ENCODE measurements at regions of chr2 and their contacts with region 1.

Region 1: DNA sequence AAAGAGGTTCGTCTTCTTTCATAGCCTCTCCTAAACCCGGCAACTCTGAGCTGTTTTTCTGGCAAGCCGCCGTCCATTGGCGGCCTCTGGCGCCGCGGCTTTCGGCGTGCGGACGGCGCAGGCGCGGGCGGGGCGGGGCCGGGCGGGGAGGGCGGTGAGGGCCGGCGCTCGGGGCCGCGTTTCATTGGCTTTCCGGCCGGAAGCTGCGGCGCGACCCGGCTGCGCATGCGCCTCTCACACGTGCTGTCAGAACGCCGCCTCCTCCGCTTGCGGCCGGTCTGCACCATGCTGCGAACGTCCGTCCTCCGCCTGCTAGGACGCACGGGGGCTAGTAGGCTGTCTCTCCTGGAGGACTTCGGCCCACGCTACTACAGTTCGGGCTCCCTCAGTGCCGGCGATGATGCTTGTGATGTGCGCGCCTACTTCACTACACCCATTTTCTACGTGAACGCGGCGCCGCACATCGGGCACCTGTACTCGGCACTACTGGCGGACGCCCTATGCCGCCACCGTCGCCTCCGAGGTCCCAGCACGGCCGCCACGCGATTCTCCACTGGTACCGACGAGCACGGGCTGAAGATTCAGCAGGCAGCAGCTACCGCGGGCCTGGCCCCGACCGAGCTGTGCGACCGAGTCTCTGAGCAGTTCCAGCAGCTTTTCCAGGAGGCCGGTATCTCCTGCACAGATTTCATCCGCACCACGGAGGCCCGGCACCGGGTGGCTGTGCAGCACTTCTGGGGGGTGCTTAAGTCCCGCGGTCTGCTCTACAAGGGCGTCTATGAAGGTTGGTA is at the start of gene MARS2:
- DNase-seq: peak; percentile 95
- H3K4me3 Mint-ChIP-seq: peak within 1 kb of the TSS; percentile 80
- H3K27ac Mint-ChIP-seq: peak within 1 kb of the TSS; percentile 88
- H3K4me1 Mint-ChIP-seq: peaks cover 41% of the 10 kb centered on the region
- H3K27me3 Mint-ChIP-seq: no peaks in the 10 kb centered on the region
- total RNA-seq, gene MARS2: 11.3 to 11.4 TPM

Region 2: DNA sequence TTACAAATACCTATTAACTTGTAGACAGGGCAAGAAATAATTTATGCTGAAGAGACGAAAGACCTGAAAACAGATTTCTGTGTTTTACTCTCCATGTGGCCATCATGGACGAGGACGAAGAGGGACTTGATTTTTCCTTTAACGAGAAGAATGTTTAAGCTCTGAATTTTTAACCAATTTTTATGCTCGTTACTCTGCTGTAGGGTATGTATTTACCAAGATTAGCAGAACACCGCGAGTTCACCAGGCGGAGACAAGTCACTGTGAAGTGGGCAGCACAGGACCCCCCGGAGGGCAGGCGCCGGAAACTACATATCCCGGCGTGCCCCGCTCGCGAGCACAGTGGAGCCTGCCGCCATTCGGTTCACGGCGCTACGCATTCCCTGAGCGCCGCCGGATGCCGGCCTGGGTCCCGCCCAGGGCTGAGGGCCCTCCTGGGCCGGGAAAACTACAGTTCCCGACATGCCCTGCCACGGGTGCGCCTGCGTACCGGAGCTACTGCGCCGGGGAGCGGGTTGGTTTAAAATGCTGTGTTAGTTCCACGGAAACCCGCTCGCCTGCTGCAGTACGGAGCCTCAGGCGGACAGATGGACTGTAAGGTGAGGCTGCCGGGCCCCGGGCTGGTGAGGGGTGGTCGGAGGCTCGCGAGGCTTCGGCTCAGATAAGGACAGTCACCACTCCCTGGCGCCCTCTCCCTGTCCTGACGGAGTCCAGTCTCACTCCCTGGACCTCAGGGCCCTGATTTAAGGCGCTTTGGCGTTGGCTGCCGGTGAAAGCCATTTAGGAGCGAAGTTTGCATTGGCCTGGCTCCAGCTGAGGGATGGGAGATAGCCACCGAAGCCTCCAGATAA is 1065.9 kb before region 1 on chr2 and contains the start of gene CCDC150:
- CTCF ChIA-PET with region 1: no interaction called
- POLR2A ChIA-PET with region 1: no interaction called
- intact Hi-C with region 1: loop called (anchors 5 kb)
- DNase-seq: peak; percentile 97
- H3K4me3 Mint-ChIP-seq: peak within 1 kb of the TSS; percentile 90
- H3K27ac Mint-ChIP-seq: peak within 1 kb of the TSS; percentile 62
- H3K4me1 Mint-ChIP-seq: peaks cover 15% of the 10 kb centered on the region
- H3K27me3 Mint-ChIP-seq: no peaks in the 10 kb centered on the region
- total RNA-seq, gene CCDC150: 13.2 to 13.9 TPM

Region 3: GRCh38 chr2:196987649-196988364 is 717.5 kb before region 1 on chr2:
- CTCF ChIA-PET with region 1: no interaction called
- POLR2A ChIA-PET with region 1: no interaction called
- intact Hi-C with region 1: loop called (anchors 10 kb)
- DNase-seq: peak; percentile 61
- H3K4me3 Mint-ChIP-seq: peak overlapping the region; percentile 7
- H3K27ac Mint-ChIP-seq: peak overlapping the region; percentile 88
- H3K4me1 Mint-ChIP-seq: peaks cover 61% of the 10 kb centered on the region
- H3K27me3 Mint-ChIP-seq: no peaks in the 10 kb centered on the region

Region 4: GRCh38 chr2:197453161-197453914 is 252.0 kb before region 1 on chr2 and contains the start of gene COQ10B:
- CTCF ChIA-PET with region 1: no interaction called
- POLR2A ChIA-PET with region 1: interaction called, 6 read pairs
- intact Hi-C with region 1: loop called (anchors 1 kb)
- DNase-seq: peak; percentile 100
- H3K4me3 Mint-ChIP-seq: peak within 1 kb of the TSS; percentile 99
- H3K27ac Mint-ChIP-seq: peak within 1 kb of the TSS; percentile 100
- H3K4me1 Mint-ChIP-seq: peaks cover 39% of the 10 kb centered on the region
- H3K27me3 Mint-ChIP-seq: no peaks in the 10 kb centered on the region
- total RNA-seq, gene COQ10B: 21.5 TPM

Region 5: GRCh38 chr2:197777823-197778407 is 72.6 kb after region 1 on chr2:
- CTCF ChIA-PET with region 1: interaction called, 8 read pairs
- POLR2A ChIA-PET with region 1: no interaction called
- intact Hi-C with region 1: loop called (anchors 1 kb)
- DNase-seq: no peak
- H3K4me3 Mint-ChIP-seq: no peak overlapping the region
- H3K27ac Mint-ChIP-seq: no peak overlapping the region
- H3K4me1 Mint-ChIP-seq: no peaks in the 10 kb centered on the region
- H3K27me3 Mint-ChIP-seq: peaks cover 5% of the 10 kb centered on the region

Region 6: DNA sequence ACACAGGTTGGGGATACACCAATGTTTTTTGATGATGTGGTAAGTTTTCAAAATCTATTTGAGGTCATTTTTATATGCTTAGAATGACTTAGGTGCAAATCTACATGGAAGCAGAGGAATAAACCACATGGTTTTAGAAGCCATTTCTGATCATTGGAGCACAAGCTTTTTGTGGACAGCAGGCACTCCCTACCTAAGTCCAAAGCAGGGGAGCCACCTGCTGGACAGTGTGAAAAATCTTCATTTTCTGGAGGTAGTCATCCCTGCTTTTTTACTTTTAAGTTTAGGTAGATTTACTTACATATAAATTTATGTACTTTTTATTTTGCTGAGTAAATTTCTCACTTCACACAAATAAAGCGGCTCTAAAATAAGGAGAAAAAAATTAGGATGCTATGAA is 422.3 kb after region 1 on chr2:
- CTCF ChIA-PET with region 1: interaction called, 4 read pairs
- POLR2A ChIA-PET with region 1: no interaction called
- intact Hi-C with region 1: loop called (anchors 2 kb)
- DNase-seq: peak; percentile 59
- H3K4me3 Mint-ChIP-seq: no peak overlapping the region
- H3K27ac Mint-ChIP-seq: no peak overlapping the region
- H3K4me1 Mint-ChIP-seq: no peaks in the 10 kb centered on the region
- H3K27me3 Mint-ChIP-seq: no peaks in the 10 kb centered on the region

Measured in activated CD4-positive, alpha-beta memory T cell treated with anti-CD3 and anti-CD28 coated beads for 36 hours (primary cell).